ENCODE measurements at regions of chr2 and their contacts with region 1.

Region 1: GRCh38 chr2:234288974-234289455 is 207.9 kb downstream of the ARL4C start:
- DNase-seq: peak; percentile 76 to 83 (median 82)
- H3K4me3 ChIP-seq: peak overlapping the region in 1 of 2 donors; percentile 23
- H3K4me3 Mint-ChIP-seq: peak overlapping the region in 4 of 8 donors; percentile 46 to 85 (median 70)
- H3K27ac ChIP-seq: peak overlapping the region; percentile 97
- H3K27ac Mint-ChIP-seq: peak overlapping the region; percentile 93 to 100 (median 100)
- H3K4me1 ChIP-seq: peaks cover 56% of the 10 kb centered on the region
- H3K4me1 Mint-ChIP-seq: peaks cover 50 to 65% (median 58%) of the 10 kb centered on the region in 4 donors
- H3K27me3 ChIP-seq: no peaks in the 10 kb centered on the region
- H3K27me3 Mint-ChIP-seq: no peaks in the 10 kb centered on the region

Region 2: GRCh38 chr2:234032279-234032856 is 256.6 kb before region 1 on chr2:
- CTCF ChIA-PET with region 1: interaction called, 3 read pairs
- POLR2A ChIA-PET with region 1: interaction called, 11 read pairs
- intact Hi-C with region 1: loop called (anchors 5 kb)
- DNase-seq: peak; percentile 67 to 87 (median 82)
- H3K4me3 ChIP-seq: no peak overlapping the region
- H3K4me3 Mint-ChIP-seq: peak overlapping the region; percentile 1 to 64 (median 38)
- H3K27ac ChIP-seq: no peak overlapping the region
- H3K27ac Mint-ChIP-seq: peak overlapping the region; percentile 56 to 91 (median 79)
- H3K4me1 ChIP-seq: peaks cover 60% of the 10 kb centered on the region
- H3K4me1 Mint-ChIP-seq: peaks cover 38 to 64% (median 49%) of the 10 kb centered on the region in 4 donors
- H3K27me3 ChIP-seq: no peaks in the 10 kb centered on the region
- H3K27me3 Mint-ChIP-seq: peaks cover 0 to 1% of the 10 kb centered on the region in 2 donors

Region 3: GRCh38 chr2:234278556-234279255 is 10.3 kb before region 1 on chr2:
- CTCF ChIA-PET with region 1: interaction called, 35 read pairs
- POLR2A ChIA-PET with region 1: interaction called, 31 read pairs
- intact Hi-C with region 1: loop called (anchors 1 kb)
- DNase-seq: peak in 4 of 5 donors; percentile 55 to 68 (median 60)
- H3K4me3 ChIP-seq: no peak overlapping the region
- H3K4me3 Mint-ChIP-seq: peak overlapping the region in 6 of 8 donors; percentile 25 to 65 (median 46)
- H3K27ac ChIP-seq: no peak overlapping the region
- H3K27ac Mint-ChIP-seq: peak overlapping the region; percentile 53 to 83 (median 75)
- H3K4me1 ChIP-seq: peaks cover 58% of the 10 kb centered on the region
- H3K4me1 Mint-ChIP-seq: peaks cover 36 to 70% (median 52%) of the 10 kb centered on the region in 4 donors
- H3K27me3 ChIP-seq: no peaks in the 10 kb centered on the region
- H3K27me3 Mint-ChIP-seq: no peaks in the 10 kb centered on the region

Region 4: DNA sequence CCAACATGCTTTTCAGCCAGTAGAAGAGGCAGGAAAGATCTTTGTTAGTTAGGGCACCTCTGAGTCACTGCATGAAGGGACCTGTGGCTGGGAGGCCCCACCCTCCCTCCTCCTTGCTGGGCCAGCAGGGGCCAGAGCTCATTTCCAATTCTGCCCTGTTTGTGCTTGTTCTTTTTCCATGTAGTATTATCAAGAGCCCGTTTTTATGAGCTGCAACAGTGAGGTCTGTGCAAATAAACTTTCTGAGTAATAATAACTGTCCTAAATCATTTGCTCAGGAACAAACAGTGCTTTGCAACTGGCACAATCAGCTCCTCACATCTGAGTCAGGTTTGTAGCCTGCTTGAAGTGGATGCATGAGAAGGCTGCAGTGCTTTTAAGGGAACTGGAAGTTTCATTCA is 79.8 kb after region 1 on chr2:
- CTCF ChIA-PET with region 1: interaction called, 38 read pairs
- POLR2A ChIA-PET with region 1: interaction called, 46 read pairs
- intact Hi-C with region 1: loop called (anchors 1 kb)
- DNase-seq: peak; percentile 31 to 70 (median 37)
- H3K4me3 ChIP-seq: no peak overlapping the region
- H3K4me3 Mint-ChIP-seq: peak overlapping the region in 4 of 8 donors; percentile 60 to 77 (median 61)
- H3K27ac ChIP-seq: peak overlapping the region; percentile 33
- H3K27ac Mint-ChIP-seq: peak overlapping the region; percentile 82 to 96 (median 93)
- H3K4me1 ChIP-seq: peaks cover 78% of the 10 kb centered on the region
- H3K4me1 Mint-ChIP-seq: peaks cover 50 to 79% (median 64%) of the 10 kb centered on the region in 4 donors
- H3K27me3 ChIP-seq: no peaks in the 10 kb centered on the region
- H3K27me3 Mint-ChIP-seq: no peaks in the 10 kb centered on the region

Region 5: GRCh38 chr2:234437642-234438304 is 148.8 kb after region 1 on chr2:
- CTCF ChIA-PET with region 1: interaction called, 11 read pairs
- POLR2A ChIA-PET with region 1: interaction called, 392 read pairs
- intact Hi-C with region 1: no loop called
- DNase-seq: no peak
- H3K4me3 ChIP-seq: no peak overlapping the region
- H3K4me3 Mint-ChIP-seq: peak overlapping the region in 3 of 8 donors; percentile 6 to 43 (median 22)
- H3K27ac ChIP-seq: no peak overlapping the region
- H3K27ac Mint-ChIP-seq: peak overlapping the region in 2 of 7 donors; percentile 68 to 88
- H3K4me1 ChIP-seq: peaks cover 72% of the 10 kb centered on the region
- H3K4me1 Mint-ChIP-seq: peaks cover 46 to 88% (median 65%) of the 10 kb centered on the region in 4 donors
- H3K27me3 ChIP-seq: no peaks in the 10 kb centered on the region
- H3K27me3 Mint-ChIP-seq: no peaks in the 10 kb centered on the region

Region 6: DNA sequence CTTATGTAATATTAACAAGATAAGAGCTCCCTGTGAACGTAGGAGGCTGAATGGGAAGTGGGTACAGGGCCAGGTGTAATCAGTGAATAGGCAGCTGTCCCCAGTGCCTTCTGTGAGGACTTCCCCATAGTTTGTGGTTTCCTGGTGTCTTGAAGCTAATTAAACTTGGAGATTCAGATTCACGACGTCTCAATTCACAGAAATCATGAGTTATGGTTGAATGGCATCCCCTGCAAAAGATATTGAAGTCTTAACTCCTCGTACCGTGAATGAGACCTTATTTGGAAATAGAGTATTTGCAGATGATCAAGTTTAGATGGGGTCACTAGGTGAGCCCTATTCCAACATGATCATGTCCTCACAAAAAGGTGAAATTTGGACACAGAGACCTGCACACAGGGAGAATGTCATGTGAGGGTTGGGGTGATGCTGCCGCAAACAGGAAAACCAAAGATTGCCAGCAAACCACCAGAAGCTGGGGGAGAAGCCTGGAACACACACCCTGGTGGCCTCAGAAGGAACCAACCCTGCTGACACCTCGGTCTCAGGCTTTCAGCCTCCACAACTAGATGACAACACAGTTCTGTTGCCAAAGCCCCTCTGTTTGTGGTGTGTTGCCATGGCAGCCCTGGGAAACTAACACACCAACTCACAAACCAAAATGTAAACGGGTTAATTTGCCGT is 194.7 kb after region 1 on chr2:
- CTCF ChIA-PET with region 1: interaction called, 39 read pairs
- POLR2A ChIA-PET with region 1: interaction called, 205 read pairs
- intact Hi-C with region 1: loop called (anchors 1 kb)
- DNase-seq: peak; percentile 86 to 95 (median 88)
- H3K4me3 ChIP-seq: peak overlapping the region in 1 of 2 donors; percentile 5
- H3K4me3 Mint-ChIP-seq: peak overlapping the region; percentile 52 to 87 (median 76)
- H3K27ac ChIP-seq: peak overlapping the region; percentile 98
- H3K27ac Mint-ChIP-seq: peak overlapping the region; percentile 97 to 99 (median 98)
- H3K4me1 ChIP-seq: peaks cover 81% of the 10 kb centered on the region
- H3K4me1 Mint-ChIP-seq: peaks cover 64 to 94% (median 78%) of the 10 kb centered on the region in 4 donors
- H3K27me3 ChIP-seq: no peaks in the 10 kb centered on the region
- H3K27me3 Mint-ChIP-seq: no peaks in the 10 kb centered on the region